ENCODE measurements at regions of chr7 and their contacts with region 1.

Region 1: GRCh38 chr7:7182156-7183060 is at the start of gene C1GALT1:
- DNase-seq: peak; percentile 95 to 100 (median 97)

Region 2: GRCh38 chr7:7103343-7104313 is 78.8 kb before region 1 on chr7:
- intact Hi-C with region 1: loop called (anchors 5 kb)
- DNase-seq: peak in 1 of 10 donors; percentile 61

Region 3: DNA sequence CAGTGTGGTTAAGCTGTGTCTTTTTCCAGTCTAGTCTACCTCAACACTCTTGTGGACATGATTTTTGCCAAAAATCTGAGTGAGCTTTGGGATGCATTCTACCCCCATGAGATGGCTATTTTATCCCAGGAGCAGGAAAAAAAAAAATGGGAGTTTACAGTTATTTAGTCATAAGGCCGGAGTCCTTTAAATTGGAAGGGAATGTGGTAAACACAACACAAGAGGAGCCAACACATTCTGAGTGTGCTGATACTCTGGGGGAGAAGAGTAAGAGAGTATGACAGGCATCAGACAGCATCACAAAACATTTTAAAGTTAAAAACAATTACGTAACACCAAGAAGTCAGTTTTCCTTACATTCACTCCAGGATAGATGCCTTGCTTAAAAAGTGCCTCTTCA is 46.1 kb after region 1 on chr7:
- intact Hi-C with region 1: loop called (anchors 2 kb)
- DNase-seq: no peak

Region 4: GRCh38 chr7:7566651-7567611 is 384.5 kb after region 1 on chr7 and contains the start of gene MIOS:
- intact Hi-C with region 1: loop called (anchors 10 kb)
- DNase-seq: peak; percentile 68 to 97 (median 82)